ENCODE measurements at regions of chr15 and their contacts with region 1.

Region 1: GRCh38 chr15:35362195-35362829 is 183.7 kb downstream of the DPH6 start:
- DNase-seq: no peak
- ATAC-seq: no peak
- H3K4me3 ChIP-seq: no peak overlapping the region
- H3K27ac ChIP-seq: no peak overlapping the region
- H3K4me1 ChIP-seq: no peaks in the 10 kb centered on the region
- H3K27me3 ChIP-seq: no peaks in the 10 kb centered on the region
- CTCF ChIP-seq: no peak
- EP300 ChIP-seq: no peak
- POLR2A ChIP-seq: no peak
- RAD21 ChIP-seq: no peak

Region 2: GRCh38 chr15:35376707-35377106 is 14.4 kb after region 1 on chr15:
- CTCF ChIA-PET with region 1: no interaction called
- POLR2A ChIA-PET with region 1: no interaction called
- in situ Hi-C with region 1: no loop called
- intact Hi-C with region 1: loop called (anchors 1 kb)
- DNase-seq: no peak
- ATAC-seq: no peak
- H3K4me3 ChIP-seq: no peak overlapping the region
- H3K27ac ChIP-seq: no peak overlapping the region
- H3K4me1 ChIP-seq: no peaks in the 10 kb centered on the region
- H3K27me3 ChIP-seq: no peaks in the 10 kb centered on the region
- CTCF ChIP-seq: no peak
- EP300 ChIP-seq: no peak
- POLR2A ChIP-seq: no peak
- RAD21 ChIP-seq: no peak

Measured in K562 (cell line).